Right cardiac atrium (tissue), 5 donors: ENCODE measurements at regions of chr1 and their contacts with region 1.

Region 1: DNA sequence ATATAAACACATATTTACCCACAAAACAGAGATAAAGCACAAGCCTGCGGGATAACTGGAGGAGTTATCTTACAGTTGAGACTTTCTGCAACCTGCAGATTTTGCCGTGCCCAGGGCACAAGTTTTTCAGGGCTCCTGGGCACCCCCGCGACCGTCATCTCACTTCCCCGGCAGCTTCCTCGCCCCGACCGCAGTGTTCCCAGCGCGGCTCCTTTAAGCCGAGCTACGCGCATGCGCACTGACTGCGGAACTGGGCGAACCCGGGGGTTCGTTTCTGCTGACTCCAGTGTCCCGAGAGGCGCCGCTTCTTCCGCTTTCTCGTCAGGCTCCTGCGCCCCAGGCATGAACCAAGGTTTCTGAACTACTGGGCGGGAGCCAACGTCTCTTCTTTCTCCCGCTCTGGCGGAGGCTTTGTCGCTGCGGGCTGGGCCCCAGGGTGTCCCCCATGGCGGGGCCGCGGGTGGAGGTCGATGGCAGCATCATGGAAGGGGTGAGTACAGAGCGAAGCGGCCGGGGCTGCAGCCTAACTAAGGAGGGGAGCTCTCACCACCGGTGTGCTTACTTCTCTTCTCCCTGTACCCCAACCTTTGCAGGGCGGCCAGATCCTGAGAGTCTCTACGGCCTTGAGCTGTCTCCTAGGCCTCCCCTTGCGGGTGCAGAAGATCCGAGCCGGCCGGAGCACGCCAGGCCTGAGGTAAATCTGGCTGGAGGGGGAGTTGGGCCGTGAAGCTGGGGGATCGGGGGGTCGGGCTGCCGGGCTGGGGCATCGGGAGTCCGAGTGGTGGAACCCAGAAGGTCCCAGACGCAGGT is at the start of gene RTCA:
- DNase-seq: peak; percentile 98 to 99 (median 99)
- ATAC-seq: peak; percentile 99
- H3K4me3 ChIP-seq: peak within 1 kb of the TSS; percentile 96
- H3K27ac ChIP-seq: peak within 1 kb of the TSS; percentile 81
- H3K4me1 ChIP-seq: no peaks in the 10 kb centered on the region
- H3K27me3 ChIP-seq: no peaks in the 10 kb centered on the region
- total RNA-seq, gene RTCA: 27.8 to 39.8 (median 34.7) TPM

Region 2: DNA sequence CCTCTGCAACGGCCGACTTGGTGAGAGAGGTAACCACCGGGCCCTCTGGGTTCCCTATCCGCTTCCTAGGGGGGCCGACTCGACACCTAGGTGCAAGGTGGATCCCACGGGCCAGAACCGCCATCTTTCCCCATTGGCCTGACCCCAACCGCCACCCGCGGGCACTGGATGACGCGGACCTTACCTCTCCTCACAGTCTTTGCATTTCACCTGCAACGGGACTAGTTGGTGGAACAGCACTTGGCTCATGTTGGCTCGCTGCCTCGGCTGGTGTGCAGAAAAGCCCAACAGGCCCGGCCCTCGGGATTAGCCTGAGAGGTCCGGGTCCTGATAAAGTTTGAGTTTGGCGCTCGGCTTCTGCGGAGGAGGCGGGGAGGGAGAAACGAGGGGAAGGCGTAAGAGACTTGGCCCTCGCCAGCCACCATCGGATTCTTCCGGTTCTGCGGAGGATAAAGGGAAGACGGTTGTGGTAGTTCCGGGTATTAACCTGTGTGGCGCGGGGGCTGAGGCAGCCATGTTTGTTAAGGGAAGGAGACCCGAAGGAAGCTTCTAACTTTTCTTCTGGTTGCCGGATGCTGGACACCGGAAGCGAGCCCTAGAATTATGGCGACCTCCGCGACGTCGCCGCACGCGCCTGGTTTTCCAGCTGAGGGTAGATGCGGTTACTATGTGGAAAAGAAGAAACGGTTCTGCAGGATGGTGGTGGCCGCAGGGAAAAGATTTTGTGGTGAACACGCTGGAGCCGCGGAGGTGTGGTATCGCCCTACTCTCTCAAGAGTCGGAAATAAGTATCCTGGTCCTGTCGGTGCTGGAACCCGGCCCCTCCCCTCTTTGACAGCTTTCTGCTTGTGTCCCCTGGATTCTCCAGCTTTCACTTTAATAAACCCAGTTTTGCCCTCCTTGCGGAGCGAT is 133.3 kb before region 1 on chr1 and contains the starts of genes SASS6 and TRMT13:
- intact Hi-C with region 1: loop called in 1 of 4 experiments (anchors 10 kb)
- DNase-seq: peak; percentile 97 to 98 (median 98)
- ATAC-seq: peak; percentile 99 to 100
- H3K4me3 ChIP-seq: peak within 1 kb of the TSS; percentile 93
- H3K27ac ChIP-seq: peak within 1 kb of the TSS; percentile 21
- H3K4me1 ChIP-seq: peaks cover 2% of the 10 kb centered on the region
- H3K27me3 ChIP-seq: no peaks in the 10 kb centered on the region
- total RNA-seq, gene SASS6: 1.6 to 2.4 (median 2.3) TPM
- total RNA-seq, gene TRMT13: 5.7 to 8.4 (median 7.5) TPM